MCF 10A (cell line): ENCODE measurements at regions of chr4 and their contacts with region 1.

Region 1: GRCh38 chr4:43132010-43132582 is 239.6 kb downstream of the GRXCR1 start:
- DNase-seq: peak; percentile 78
- H3K4me3 Mint-ChIP-seq: no peak overlapping the region
- H3K27ac Mint-ChIP-seq: peak overlapping the region; percentile 76
- H3K4me1 Mint-ChIP-seq: no peaks in the 10 kb centered on the region
- H3K27me3 Mint-ChIP-seq: no peaks in the 10 kb centered on the region
- CTCF ChIP-seq: peak; percentile 81

Region 2: DNA sequence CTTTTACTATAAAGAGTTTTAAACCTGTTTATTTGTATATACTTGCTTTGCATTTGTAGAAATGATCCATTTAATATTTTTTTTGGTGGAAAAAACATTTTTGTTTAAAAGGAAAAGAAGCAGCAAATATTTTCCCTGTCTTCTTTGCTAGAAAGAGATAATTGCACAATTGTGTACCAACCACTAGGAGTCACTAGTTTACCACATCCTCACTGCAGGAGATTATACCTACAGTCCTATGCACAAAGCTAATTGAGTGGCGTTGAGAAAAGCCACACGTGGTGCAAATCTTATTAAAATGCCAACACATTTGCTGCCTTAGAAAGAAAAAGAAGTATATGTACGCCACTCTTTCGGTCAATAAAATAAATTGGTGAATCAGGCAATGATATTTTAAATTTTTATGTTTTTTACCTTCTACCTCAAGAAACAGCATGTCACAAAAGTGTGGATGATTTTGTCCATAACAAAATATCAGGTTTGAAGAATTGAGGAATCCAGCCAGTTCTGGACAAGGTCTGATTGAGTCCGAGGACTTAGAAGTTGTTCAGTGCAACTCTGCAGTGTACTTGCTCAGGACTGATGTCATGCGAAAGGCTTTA is 136.7 kb before region 1 on chr4:
- CTCF ChIA-PET with region 1: no interaction called
- POLR2A ChIA-PET with region 1: no interaction called
- intact Hi-C with region 1: loop called (anchors 1 kb)
- DNase-seq: peak; percentile 66
- H3K4me3 Mint-ChIP-seq: no peak overlapping the region
- H3K27ac Mint-ChIP-seq: no peak overlapping the region
- H3K4me1 Mint-ChIP-seq: no peaks in the 10 kb centered on the region
- H3K27me3 Mint-ChIP-seq: no peaks in the 10 kb centered on the region
- CTCF ChIP-seq: peak; percentile 82

Region 3: DNA sequence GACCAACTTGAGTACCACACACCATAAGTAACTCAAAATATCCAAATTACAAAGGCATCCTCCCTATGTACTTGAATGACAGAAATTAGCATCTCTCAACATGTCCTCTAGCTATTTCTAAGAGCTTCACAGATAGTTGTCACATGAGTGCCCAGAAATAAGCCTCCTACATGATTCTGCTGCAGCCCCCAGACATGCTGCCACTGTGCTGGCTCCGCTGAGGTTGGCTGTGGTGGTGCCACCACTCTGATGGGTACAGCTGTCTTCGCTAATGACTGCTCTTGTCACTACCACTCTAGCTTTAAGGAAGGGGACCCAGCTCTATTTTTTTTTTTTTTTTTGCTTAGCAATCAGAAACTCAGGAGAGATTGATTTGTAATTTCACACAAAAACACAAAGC is 16.4 kb after region 1 on chr4:
- CTCF ChIA-PET with region 1: interaction called, 12 read pairs
- POLR2A ChIA-PET with region 1: no interaction called
- intact Hi-C with region 1: no loop called
- DNase-seq: no peak
- H3K4me3 Mint-ChIP-seq: no peak overlapping the region
- H3K27ac Mint-ChIP-seq: no peak overlapping the region
- H3K4me1 Mint-ChIP-seq: no peaks in the 10 kb centered on the region
- H3K27me3 Mint-ChIP-seq: no peaks in the 10 kb centered on the region
- CTCF ChIP-seq: no peak

Region 4: DNA sequence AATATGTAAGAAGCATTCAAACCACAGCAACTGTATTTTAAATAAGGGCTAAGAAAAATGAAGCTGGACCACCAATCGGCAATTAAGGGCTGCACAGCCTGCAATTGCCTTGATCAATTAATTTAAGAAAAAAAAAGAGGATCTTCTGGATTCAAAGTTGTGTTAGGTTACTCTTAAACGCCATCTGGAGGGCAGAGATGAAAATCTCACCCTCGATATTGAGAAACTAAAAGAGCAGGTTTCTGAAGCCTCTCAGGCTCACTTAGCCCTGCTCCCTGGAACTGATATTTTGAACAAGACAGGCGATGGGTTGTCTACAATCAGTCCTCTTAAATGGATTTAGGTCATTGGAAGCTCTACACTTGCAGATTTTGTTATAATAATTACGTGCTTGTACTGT is 339.9 kb after region 1 on chr4:
- CTCF ChIA-PET with region 1: interaction called, 25 read pairs
- POLR2A ChIA-PET with region 1: interaction called, 3 read pairs
- intact Hi-C with region 1: no loop called
- DNase-seq: no peak
- H3K4me3 Mint-ChIP-seq: no peak overlapping the region
- H3K27ac Mint-ChIP-seq: no peak overlapping the region
- H3K4me1 Mint-ChIP-seq: no peaks in the 10 kb centered on the region
- H3K27me3 Mint-ChIP-seq: no peaks in the 10 kb centered on the region
- CTCF ChIP-seq: peak; percentile 7

Region 5: DNA sequence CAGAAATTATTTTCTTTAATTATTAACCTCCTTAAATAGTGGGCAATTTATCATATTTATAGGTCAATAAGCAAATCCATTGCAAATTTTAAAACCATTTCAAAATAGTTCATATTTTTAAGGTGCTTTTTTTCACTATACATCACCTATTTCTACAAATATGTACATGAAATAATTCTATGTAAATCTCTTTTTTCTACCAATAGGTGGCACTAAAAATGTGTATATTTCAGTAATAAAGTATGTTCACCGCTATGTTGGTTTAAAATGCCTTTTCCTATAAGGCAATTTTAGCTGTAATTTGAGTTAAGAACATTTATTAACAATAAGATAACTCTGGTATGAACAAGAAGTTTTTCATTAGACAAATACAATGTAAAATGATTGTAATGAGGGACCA is 644.3 kb after region 1 on chr4:
- CTCF ChIA-PET with region 1: interaction called, 9 read pairs
- POLR2A ChIA-PET with region 1: no interaction called
- intact Hi-C with region 1: loop called (anchors 1 kb)
- DNase-seq: peak; percentile 29
- H3K4me3 Mint-ChIP-seq: no peak overlapping the region
- H3K27ac Mint-ChIP-seq: no peak overlapping the region
- H3K4me1 Mint-ChIP-seq: no peaks in the 10 kb centered on the region
- H3K27me3 Mint-ChIP-seq: no peaks in the 10 kb centered on the region
- CTCF ChIP-seq: peak; percentile 42

Region 6: DNA sequence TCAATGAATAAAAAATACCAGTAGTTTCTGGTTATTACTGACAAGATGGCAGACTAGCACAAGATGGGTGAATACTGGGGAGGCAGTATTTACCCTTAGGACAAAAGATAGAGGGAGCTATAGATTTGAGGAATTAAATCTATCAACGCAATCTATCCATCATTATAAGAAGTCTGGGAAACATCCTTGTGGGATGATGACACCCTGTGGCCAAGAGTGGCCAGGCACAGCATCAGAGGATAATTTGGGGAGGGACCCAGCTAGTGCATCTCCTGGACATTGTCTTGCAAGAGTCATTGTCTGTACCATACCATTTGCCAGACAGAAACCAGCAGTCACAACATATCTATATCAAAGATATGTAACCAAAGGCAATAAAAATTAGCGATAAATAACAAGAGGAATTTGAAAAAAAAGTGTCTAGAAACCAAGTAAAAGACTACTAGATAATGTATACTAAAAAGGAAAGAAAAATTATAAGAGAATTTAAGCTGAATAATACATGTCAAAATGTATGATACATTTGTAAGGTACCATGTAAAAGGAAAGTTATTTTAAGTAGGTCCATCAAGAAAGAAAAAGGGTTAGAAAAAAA is 1293.6 kb after region 1 on chr4:
- CTCF ChIA-PET with region 1: interaction called, 6 read pairs
- POLR2A ChIA-PET with region 1: interaction called, 3 read pairs
- intact Hi-C with region 1: loop called (anchors 1 kb)
- DNase-seq: peak; percentile 67
- H3K4me3 Mint-ChIP-seq: no peak overlapping the region
- H3K27ac Mint-ChIP-seq: no peak overlapping the region
- H3K4me1 Mint-ChIP-seq: no peaks in the 10 kb centered on the region
- H3K27me3 Mint-ChIP-seq: no peaks in the 10 kb centered on the region
- CTCF ChIP-seq: peak; percentile 71

Region 7: DNA sequence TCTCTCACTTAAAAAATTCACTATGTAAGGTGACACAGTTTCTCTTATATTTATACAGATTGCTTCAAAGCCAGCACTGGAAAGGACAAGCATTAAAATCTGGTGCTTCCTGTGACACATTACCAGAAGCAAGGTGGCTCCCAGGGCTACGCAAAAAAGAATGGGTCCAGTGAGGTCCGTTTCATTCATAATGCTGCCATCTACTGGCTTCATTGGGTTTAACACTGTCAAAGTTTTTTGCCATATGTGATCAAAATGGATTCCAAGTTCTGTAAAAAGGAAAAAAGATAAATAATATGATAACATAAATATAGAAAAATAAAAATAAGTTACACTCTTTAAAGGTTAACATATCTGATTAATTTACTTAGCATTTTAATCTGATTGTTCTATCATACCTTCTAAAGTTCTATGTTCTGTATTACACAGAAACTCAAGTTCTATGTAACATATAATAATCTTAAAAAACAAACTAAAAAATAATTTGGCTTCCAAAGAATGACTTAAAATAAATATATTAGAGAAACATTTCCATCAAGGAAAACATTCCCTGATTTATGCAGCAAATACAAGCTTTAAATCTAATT is 1497.3 kb after region 1 on chr4:
- CTCF ChIA-PET with region 1: no interaction called
- POLR2A ChIA-PET with region 1: no interaction called
- intact Hi-C with region 1: loop called (anchors 2 kb)
- DNase-seq: peak; percentile 72
- H3K4me3 Mint-ChIP-seq: no peak overlapping the region
- H3K27ac Mint-ChIP-seq: peak overlapping the region; percentile 71
- H3K4me1 Mint-ChIP-seq: no peaks in the 10 kb centered on the region
- H3K27me3 Mint-ChIP-seq: no peaks in the 10 kb centered on the region
- CTCF ChIP-seq: peak; percentile 74